A549 (cell line): ENCODE measurements at regions of chr15 and their contacts with region 1.

Region 1: GRCh38 chr15:75201609-75202250 is at the start of gene C15orf39:
- DNase-seq: peak; percentile 79 to 92
- ATAC-seq: peak; percentile 67 to 75
- H3K4me3 ChIP-seq: peak within 1 kb of the TSS; percentile 84
- H3K27ac ChIP-seq: peak within 1 kb of the TSS; percentile 92 to 93
- H3K4me1 ChIP-seq: peaks cover 32% of the 10 kb centered on the region
- CTCF ChIP-seq: peak; percentile 98
- EP300 ChIP-seq: no peak
- POLR2A ChIP-seq: peak; percentile 94
- RAD21 ChIP-seq: peak; percentile 51 to 78; a peak in 4 of 5 replicates
- polyA plus RNA-seq, gene C15orf39: 5.7 and 8.8 TPM in 2 replicates

Region 2: GRCh38 chr15:74857082-74857655 is 344.6 kb before region 1 on chr15:
- CTCF ChIA-PET with region 1: no interaction called
- POLR2A ChIA-PET with region 1: no interaction called
- DNase-seq: no peak
- ATAC-seq: peak in 1 of 2 experiments; percentile 44; a peak in 2 of 6 replicates
- H3K4me3 ChIP-seq: no peak overlapping the region
- H3K27ac ChIP-seq: no peak overlapping the region
- H3K4me1 ChIP-seq: peaks cover 5% of the 10 kb centered on the region; the same call in 1 of the 3 replicates
- CTCF ChIP-seq: no peak
- EP300 ChIP-seq: no peak
- POLR2A ChIP-seq: no peak
- RAD21 ChIP-seq: no peak

Region 3: DNA sequence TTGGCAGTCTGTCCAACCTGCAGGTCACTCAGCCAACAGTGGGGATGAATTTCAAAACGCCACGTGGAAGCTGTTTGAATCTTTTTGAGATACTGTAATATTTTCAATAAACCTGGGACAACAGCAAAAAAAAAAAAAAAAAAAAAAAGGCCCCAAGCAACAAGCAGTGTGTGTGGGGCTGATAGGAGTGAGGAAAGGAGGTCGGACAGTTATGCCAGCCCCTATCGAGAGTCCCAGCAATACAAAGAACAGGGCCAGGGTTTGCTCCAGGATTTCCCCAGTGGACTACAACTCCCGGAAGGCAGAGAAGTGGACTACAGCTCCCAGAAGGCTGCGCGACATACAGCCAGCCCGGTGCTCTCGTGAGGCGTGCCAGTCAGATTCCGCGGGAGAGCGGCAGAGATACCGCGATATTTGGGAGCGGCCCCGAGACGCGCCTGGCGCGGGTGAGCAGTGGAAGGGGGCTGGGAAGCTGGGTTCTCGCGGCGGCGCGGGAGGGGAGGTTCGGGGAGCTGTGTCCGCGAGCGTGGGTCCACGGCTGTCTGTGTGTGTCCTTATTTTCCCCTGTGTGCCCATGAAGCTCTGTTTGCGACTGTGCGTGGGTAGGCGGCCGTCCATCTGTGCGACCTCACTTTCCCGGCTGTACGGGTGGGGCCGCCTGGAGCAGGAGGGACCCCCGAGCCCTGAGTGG is 178.4 kb before region 1 on chr15 and contains the start of gene PPCDC:
- CTCF ChIA-PET with region 1: interaction called, 324 read pairs
- POLR2A ChIA-PET with region 1: interaction called, 8 read pairs
- DNase-seq: peak; percentile 97 to 100
- ATAC-seq: peak; percentile 98 to 99
- H3K4me3 ChIP-seq: peak within 1 kb of the TSS; percentile 71
- H3K27ac ChIP-seq: peak within 1 kb of the TSS; percentile 90 to 94
- H3K4me1 ChIP-seq: peaks cover 4% of the 10 kb centered on the region; the same call in 1 of the 3 replicates
- CTCF ChIP-seq: no peak
- EP300 ChIP-seq: no peak
- POLR2A ChIP-seq: peak; percentile 98
- RAD21 ChIP-seq: no peak
- polyA plus RNA-seq, gene PPCDC: 14.5 and 18.2 TPM in 2 replicates

Region 4: DNA sequence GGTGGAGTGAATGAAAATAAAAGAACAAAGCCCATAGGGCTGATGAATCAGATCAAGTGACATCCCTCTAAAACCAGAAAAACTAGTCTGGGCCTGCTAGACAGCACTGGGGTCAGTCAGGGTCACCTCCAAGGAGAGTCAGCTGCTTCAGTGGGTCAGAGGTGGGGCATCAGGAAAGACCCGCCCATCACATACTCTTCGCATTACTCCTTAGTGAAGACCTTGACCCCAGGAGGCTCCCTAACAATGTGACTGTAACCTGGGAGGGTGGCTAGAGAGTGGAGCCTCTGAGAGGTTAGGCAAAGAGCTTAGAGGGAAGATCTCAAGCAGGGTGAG is 165.4 kb before region 1 on chr15:
- CTCF ChIA-PET with region 1: interaction called, 324 read pairs
- POLR2A ChIA-PET with region 1: interaction called, 5 read pairs
- DNase-seq: peak in 1 of 2 experiments; percentile 44
- ATAC-seq: peak; percentile 44 to 48; a peak in 3 of 6 replicates
- H3K4me3 ChIP-seq: no peak overlapping the region
- H3K27ac ChIP-seq: peak overlapping the region in 1 of 2 experiments; percentile 5; a peak in 1 of 6 replicates
- H3K4me1 ChIP-seq: peaks cover 31% of the 10 kb centered on the region
- CTCF ChIP-seq: no peak
- EP300 ChIP-seq: no peak
- POLR2A ChIP-seq: no peak
- RAD21 ChIP-seq: no peak

Region 5: GRCh38 chr15:75051191-75051608 is 150.5 kb before region 1 on chr15:
- CTCF ChIA-PET with region 1: interaction called, 10 read pairs
- POLR2A ChIA-PET with region 1: no interaction called
- DNase-seq: no peak
- ATAC-seq: no peak
- H3K4me3 ChIP-seq: no peak overlapping the region
- H3K27ac ChIP-seq: no peak overlapping the region
- H3K4me1 ChIP-seq: peaks cover 16% of the 10 kb centered on the region
- CTCF ChIP-seq: no peak
- EP300 ChIP-seq: no peak
- POLR2A ChIP-seq: no peak
- RAD21 ChIP-seq: no peak

Region 6: DNA sequence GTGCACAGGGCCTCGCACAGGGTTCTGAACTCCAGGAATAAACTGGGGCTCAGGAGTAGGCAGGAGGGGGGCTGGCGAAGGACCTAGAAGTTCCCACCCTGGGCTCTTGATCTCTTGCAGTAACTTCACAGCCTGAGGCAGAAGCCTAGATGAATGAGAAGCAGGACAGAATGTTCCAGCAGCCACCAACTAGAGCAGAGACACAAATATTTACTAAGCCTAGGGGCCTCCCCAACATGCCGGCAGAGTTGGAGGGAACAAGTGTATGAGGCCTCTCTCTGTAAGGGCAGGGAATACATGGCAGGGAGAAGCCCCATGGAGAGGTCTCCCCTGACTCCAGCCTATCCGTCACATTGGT is 25.3 kb before region 1 on chr15:
- CTCF ChIA-PET with region 1: interaction called, 6 read pairs
- POLR2A ChIA-PET with region 1: interaction called, 19 read pairs
- DNase-seq: no peak
- ATAC-seq: peak in 1 of 2 experiments; percentile 13; a peak in 2 of 6 replicates
- H3K4me3 ChIP-seq: no peak overlapping the region
- H3K27ac ChIP-seq: peak overlapping the region; percentile 76 to 79
- H3K4me1 ChIP-seq: peaks cover 42% of the 10 kb centered on the region
- CTCF ChIP-seq: no peak
- EP300 ChIP-seq: no peak
- POLR2A ChIP-seq: no peak
- RAD21 ChIP-seq: no peak

Region 7: GRCh38 chr15:75307778-75308391 is 106.2 kb after region 1 on chr15:
- CTCF ChIA-PET with region 1: interaction called, 32 read pairs
- POLR2A ChIA-PET with region 1: interaction called, 4 read pairs
- DNase-seq: peak; percentile 77 to 92
- ATAC-seq: peak; percentile 99 to 100
- H3K4me3 ChIP-seq: no peak overlapping the region
- H3K27ac ChIP-seq: peak overlapping the region in 1 of 2 experiments; percentile 42; a peak in 1 of 6 replicates
- H3K4me1 ChIP-seq: peaks cover 6% of the 10 kb centered on the region; the same call in 2 of the 3 replicates
- CTCF ChIP-seq: peak; percentile 76
- EP300 ChIP-seq: no peak
- POLR2A ChIP-seq: no peak
- RAD21 ChIP-seq: peak; percentile 93 to 96